ENCODE measurements at regions of chr2 and their contacts with region 1.

Region 1: GRCh38 chr2:142112648-142113278 is 18.1 kb downstream of the LRP1B start:
- DNase-seq: peak; percentile 10
- H3K4me3 Mint-ChIP-seq: no peak overlapping the region
- H3K27ac Mint-ChIP-seq: no peak overlapping the region
- H3K4me1 Mint-ChIP-seq: no peaks in the 10 kb centered on the region
- H3K27me3 Mint-ChIP-seq: no peaks in the 10 kb centered on the region
- CTCF ChIP-seq: no peak

Region 2: GRCh38 chr2:141957827-141958450 is 154.8 kb before region 1 on chr2:
- CTCF ChIA-PET with region 1: no interaction called
- intact Hi-C with region 1: loop called (anchors 10 kb)
- DNase-seq: no peak
- H3K4me3 Mint-ChIP-seq: no peak overlapping the region
- H3K27ac Mint-ChIP-seq: no peak overlapping the region
- H3K4me1 Mint-ChIP-seq: peaks cover 11% of the 10 kb centered on the region
- H3K27me3 Mint-ChIP-seq: no peaks in the 10 kb centered on the region
- CTCF ChIP-seq: no peak

Region 3: DNA sequence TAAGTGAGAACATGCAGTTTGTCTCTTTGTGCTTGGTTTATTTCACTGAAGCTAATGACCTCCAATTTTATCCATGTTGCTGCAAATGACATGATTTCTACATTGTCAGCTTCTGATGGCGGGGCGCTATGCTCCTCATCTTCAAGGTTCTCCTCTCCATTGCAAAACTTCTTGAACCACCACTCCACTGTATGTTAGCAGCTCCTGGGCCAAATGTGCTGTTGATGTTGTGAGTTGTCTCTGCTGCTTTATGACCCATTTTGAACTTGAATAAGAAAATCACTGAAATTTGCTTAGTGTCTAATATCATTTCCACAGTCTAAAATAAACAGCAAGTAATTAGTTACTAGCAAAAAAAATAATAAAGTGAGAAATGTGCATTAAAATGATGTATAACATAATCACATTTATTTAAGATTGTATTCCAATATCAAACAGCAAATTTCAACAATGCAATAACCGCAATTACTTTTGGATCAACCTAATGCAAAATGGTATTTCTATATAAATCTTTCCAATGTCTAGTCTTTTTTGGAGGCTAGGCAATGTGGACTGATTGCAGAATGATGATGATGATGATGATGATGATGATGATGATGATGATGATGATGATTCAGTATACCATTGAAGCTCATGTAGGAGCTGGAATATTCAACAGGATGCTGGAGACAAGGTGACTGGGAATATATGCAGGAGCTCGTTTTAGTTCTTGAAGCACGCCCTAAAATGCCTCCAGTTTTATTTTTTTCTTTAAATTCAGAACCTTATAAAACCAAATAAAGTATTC is 459.8 kb after region 1 on chr2:
- CTCF ChIA-PET with region 1: no interaction called
- intact Hi-C with region 1: no loop called
- DNase-seq: no peak
- H3K4me3 Mint-ChIP-seq: no peak overlapping the region
- H3K27ac Mint-ChIP-seq: no peak overlapping the region
- H3K4me1 Mint-ChIP-seq: no peaks in the 10 kb centered on the region
- H3K27me3 Mint-ChIP-seq: no peaks in the 10 kb centered on the region
- CTCF ChIP-seq: no peak

Measured in Calu3 (cell line).